ENCODE measurements at regions of chr5 and their contacts with region 1.

Region 1: GRCh38 chr5:31193591-31194467 is at the start of gene CDH6:
- DNase-seq: peak; percentile 23 to 92 (median 44)

Region 2: DNA sequence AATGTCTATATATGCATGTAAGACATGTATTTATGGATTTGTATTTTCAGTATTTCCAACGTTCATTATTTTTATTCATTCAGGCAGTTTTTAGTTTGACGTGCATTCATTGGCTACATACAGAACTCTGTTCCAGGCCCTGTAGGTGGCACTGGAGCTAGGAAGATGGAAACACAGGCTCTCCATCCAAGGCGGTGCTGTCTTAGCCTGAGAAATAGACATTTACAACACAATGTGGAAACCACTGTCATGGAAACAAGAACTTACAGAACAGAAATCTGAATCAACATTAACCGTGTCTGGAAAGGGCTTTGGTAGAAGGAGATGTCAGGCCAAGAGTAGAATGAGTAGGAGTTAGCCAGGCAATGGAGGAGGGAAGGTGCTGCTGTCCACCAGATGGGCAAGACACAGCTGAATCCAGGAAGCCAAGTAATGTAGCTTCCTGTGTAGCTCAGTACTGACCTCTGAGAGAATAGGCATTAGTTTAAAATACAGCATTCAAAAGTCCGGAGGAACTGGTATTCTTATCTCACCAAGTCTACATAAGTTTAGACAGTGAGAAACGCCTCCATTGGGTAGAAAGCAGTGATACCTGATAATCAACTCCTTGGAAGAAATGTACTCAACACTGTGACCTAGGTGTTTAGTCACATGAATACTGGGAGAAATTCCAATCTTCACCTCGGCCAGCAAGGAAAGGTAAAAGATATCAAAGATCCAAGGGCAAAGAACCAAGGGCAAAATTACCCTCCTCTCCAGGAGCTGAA is 388.9 kb before region 1 on chr5:
- intact Hi-C with region 1: loop called (anchors 10 kb)
- DNase-seq: peak in 1 of 10 donors; percentile 52

Measured in posterior cingulate gyrus (tissue), 11 donors.